H1 (cell line): ENCODE measurements at regions of chr15 and their contacts with region 1.

Region 1: DNA sequence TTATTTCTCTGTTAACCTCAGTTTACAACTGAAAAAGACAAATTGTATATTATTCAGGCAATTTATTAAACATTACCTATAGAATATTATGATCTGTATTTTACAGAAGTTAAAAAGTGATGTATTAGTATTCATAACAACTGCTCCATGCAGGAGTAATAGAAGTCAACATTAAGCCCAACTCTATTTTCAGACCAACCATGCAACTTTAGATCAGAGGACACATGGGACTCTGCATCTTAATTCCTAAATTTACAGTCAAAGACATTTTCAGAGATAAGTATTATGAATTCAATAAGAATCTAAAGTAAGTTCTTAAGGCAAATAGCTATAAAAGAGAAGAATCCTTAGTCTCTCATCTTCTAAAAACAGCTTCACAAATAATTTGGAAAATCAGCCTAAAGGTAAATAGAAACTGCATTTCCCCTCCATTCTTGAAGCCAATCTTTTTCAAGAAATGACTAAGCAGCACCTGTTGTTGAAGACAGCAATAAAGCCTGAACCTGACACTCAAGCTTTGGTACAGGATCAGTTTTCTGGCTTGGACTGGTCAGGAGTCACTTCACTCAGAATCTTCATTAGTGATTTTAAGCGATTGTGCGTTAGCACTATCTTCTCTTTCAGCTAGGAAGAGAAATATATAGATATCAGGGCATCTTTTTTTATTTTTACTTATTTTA is 23.0 kb downstream of the OIP5 start:
- DNase-seq: no peak
- H3K4me3 ChIP-seq: no peak overlapping the region
- H3K27ac ChIP-seq: no peak overlapping the region
- H3K4me1 ChIP-seq: no peaks in the 10 kb centered on the region
- H3K27me3 ChIP-seq: no peaks in the 10 kb centered on the region
- CTCF ChIP-seq: no peak
- EP300 ChIP-seq: no peak
- POLR2A ChIP-seq: no peak
- RAD21 ChIP-seq: no peak

Region 2: DNA sequence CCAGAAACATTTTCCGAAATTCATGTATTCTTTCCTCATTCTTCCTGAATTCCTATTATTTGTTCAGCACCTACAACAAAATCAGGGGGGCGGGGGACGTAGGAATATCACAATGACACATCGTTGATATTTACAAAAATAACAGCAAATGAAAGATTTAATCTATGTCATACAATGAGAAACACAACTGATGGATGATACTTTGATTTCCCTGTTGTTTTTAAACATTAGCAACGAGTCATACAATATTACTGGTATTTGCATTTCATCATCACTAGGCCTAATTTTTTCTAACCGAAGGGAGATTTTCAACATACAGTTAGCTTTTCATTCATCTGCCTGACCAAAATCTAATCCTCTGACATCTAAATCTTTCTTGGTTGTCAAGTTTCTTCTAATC is 148.0 kb before region 1 on chr15:
- CTCF ChIA-PET with region 1: no interaction called
- POLR2A ChIA-PET with region 1: no interaction called
- DNase-seq: no peak
- H3K4me3 ChIP-seq: no peak overlapping the region
- H3K27ac ChIP-seq: no peak overlapping the region
- H3K4me1 ChIP-seq: no peaks in the 10 kb centered on the region
- H3K27me3 ChIP-seq: no peaks in the 10 kb centered on the region
- CTCF ChIP-seq: no peak
- EP300 ChIP-seq: no peak
- POLR2A ChIP-seq: no peak
- RAD21 ChIP-seq: no peak

Region 3: DNA sequence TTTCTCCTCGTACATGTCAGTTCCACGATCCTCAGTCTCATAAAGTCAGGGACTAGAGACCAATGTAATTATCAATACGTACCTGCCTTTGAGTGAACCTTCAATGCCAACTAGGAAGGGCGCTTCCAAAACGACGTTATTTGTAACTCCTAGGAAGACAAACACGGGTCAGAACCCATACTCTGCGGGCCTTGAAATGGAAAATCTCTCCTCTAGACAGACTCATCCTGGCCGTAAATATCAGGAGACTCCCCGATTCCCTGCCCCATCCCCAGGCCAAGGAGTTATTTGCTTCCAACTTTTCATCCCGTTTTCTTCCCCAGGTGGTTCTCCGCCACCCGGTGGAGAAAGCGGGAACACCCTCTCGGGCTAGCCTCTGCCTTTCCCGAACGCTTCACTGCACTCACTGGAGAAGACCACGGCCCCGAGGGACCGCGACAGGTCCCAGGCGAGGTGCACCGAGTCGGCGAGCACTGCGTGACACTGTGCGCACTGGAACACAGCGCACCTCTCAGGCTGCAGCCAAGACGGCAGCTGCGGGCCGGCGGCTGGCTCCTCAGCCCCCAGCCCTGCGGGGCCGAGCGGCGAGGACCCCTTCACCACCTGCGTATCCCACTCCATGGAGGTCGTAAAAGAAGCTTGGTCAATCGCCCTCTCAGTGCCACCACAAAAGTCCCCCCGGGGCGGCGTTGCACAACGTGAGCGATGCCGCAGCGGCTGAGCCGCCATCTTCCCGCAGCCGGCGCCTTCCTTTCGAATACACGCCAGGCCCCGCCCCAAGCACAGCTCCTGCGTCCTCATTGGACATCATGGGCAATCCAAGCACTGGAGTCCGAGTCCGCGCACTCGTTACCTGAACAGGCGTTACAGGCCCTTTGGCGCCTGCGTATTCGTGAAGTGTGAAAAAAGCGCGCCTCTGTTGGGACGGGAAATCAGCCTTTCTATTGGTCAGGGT is 22.7 kb after region 1 on chr15 and contains the start of gene OIP5:
- CTCF ChIA-PET with region 1: interaction called, 4 read pairs
- POLR2A ChIA-PET with region 1: interaction called, 12 read pairs
- DNase-seq: peak; percentile 93 to 98
- H3K4me3 ChIP-seq: peak within 1 kb of the TSS; percentile 83 to 92 (median 90)
- H3K27ac ChIP-seq: peak within 1 kb of the TSS; percentile 90
- H3K4me1 ChIP-seq: no peaks in the 10 kb centered on the region; a peak in 1 of 7 replicates
- H3K27me3 ChIP-seq: no peaks in the 10 kb centered on the region
- CTCF ChIP-seq: peak; percentile 61 to 69 (median 62)
- EP300 ChIP-seq: no peak
- POLR2A ChIP-seq: peak; percentile 96 to 98
- RAD21 ChIP-seq: peak; percentile 59 to 61
- total RNA-seq, gene OIP5: 34.8 and 36.7 TPM in 2 replicates